ENCODE measurements at regions of chr10 and their contacts with region 1.

Region 1: GRCh38 chr10:93376372-93377293 is 105.5 kb downstream of the MYOF start:
- DNase-seq: peak; percentile 41
- ATAC-seq: peak; percentile 20
- H3K4me3 Mint-ChIP-seq: no peak overlapping the region
- H3K27ac Mint-ChIP-seq: no peak overlapping the region
- H3K4me1 Mint-ChIP-seq: peaks cover 51% of the 10 kb centered on the region
- H3K27me3 Mint-ChIP-seq: peaks cover 5% of the 10 kb centered on the region

Region 2: DNA sequence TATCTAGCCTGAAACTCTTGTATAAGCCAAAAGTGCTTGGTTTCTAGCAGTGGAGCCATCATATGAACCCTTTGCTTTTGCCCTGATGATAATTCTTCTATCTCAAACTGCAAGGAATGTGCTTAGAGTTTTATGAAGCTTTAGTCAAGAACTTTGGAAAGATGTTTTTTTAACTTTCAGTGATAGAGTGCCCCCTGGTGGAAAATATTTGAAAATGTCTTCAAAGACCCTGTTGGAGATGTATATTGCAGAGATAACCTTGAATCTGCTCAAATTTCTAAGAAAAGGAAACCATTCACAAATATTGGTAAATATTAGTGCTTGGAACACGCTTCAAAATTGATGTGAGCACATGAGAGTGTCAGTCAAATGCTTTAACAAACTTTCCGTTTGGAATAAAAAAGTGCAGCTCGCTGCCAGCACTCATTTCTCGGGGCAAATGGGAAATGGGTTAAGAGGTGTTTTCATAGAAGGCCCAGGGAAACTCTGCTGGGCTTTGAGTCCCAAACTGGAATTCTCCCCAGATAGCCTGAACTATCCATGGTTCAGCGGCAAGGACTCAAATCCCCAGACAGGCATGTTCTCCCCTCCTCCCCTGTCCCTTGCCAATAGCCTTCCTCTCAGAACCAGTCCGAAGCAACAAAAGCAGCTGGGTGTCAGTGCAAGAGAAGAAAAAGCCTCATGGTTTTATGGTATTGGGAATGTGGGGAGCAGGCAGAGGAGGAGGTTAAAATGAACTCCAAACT is 23.8 kb before region 1 on chr10:
- CTCF ChIA-PET with region 1: interaction called, 24 read pairs
- POLR2A ChIA-PET with region 1: no interaction called
- intact Hi-C with region 1: no loop called
- DNase-seq: no peak
- ATAC-seq: no peak
- H3K4me3 Mint-ChIP-seq: no peak overlapping the region
- H3K27ac Mint-ChIP-seq: no peak overlapping the region
- H3K4me1 Mint-ChIP-seq: peaks cover 3% of the 10 kb centered on the region
- H3K27me3 Mint-ChIP-seq: peaks cover 4% of the 10 kb centered on the region

Region 3: GRCh38 chr10:93413252-93413689 is 36.6 kb after region 1 on chr10:
- CTCF ChIA-PET with region 1: interaction called, 10 read pairs
- POLR2A ChIA-PET with region 1: no interaction called
- intact Hi-C with region 1: loop called (anchors 2 kb)
- DNase-seq: peak; percentile 35
- ATAC-seq: peak; percentile 62
- H3K4me3 Mint-ChIP-seq: no peak overlapping the region
- H3K27ac Mint-ChIP-seq: peak overlapping the region; percentile 73
- H3K4me1 Mint-ChIP-seq: peaks cover 69% of the 10 kb centered on the region
- H3K27me3 Mint-ChIP-seq: no peaks in the 10 kb centered on the region

Region 4: GRCh38 chr10:93496322-93497041 is 119.8 kb after region 1 on chr10 and contains the start of gene CEP55:
- CTCF ChIA-PET with region 1: interaction called, 48 read pairs
- POLR2A ChIA-PET with region 1: no interaction called
- intact Hi-C with region 1: loop called in 1 of 2 experiments (anchors 5 kb)
- DNase-seq: peak; percentile 98
- ATAC-seq: peak; percentile 99
- H3K4me3 Mint-ChIP-seq: peak within 1 kb of the TSS; percentile 78
- H3K27ac Mint-ChIP-seq: peak within 1 kb of the TSS; percentile 84
- H3K4me1 Mint-ChIP-seq: peaks cover 25% of the 10 kb centered on the region
- H3K27me3 Mint-ChIP-seq: peaks cover 2% of the 10 kb centered on the region
- total RNA-seq, gene CEP55: 67.8 to 76.0 TPM

Region 5: GRCh38 chr10:93515071-93516005 is 138.7 kb after region 1 on chr10:
- CTCF ChIA-PET with region 1: interaction called, 115 read pairs
- POLR2A ChIA-PET with region 1: no interaction called
- intact Hi-C with region 1: loop called (anchors 1 kb)
- DNase-seq: no peak
- ATAC-seq: no peak
- H3K4me3 Mint-ChIP-seq: no peak overlapping the region
- H3K27ac Mint-ChIP-seq: no peak overlapping the region
- H3K4me1 Mint-ChIP-seq: peaks cover 5% of the 10 kb centered on the region
- H3K27me3 Mint-ChIP-seq: no peaks in the 10 kb centered on the region

Region 6: DNA sequence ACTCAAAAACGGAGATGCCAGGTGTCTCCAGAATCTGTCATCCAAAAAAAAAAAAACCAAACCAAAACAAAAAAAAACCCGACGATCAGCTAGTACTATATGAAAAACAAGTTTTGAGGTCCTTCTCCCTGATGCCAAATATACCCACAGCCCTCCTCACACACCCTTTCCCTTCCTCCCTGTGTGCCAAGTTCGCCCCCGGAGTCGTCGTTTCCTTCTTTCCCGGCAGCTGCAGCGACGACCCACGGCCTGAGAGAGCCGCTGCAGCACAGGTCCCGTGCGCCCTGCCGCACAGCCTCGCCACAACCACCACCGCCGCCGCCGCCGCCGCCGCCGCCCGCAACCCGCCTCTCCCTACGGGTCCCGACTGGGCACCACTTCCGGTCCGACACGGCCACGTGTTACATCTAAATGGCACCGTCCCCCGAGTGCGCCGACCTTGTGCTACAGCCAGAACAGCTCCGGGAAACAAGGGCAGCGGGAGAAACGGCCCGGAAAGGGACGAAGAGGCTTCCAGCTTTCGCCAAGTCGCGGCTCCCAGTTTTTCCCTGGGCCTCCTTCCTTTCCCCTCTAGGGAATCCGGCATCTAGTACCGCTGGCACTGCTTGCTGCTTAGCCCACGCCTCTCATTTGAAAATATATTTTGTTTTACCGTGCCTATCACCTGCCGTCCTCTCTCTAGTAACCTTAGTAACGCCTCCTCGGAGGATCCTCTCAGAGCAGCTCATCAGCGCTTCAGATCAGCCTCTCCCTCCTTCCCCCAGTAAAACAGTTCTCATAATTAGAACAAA is 325.8 kb after region 1 on chr10 and contains the start of gene FRA10AC1:
- CTCF ChIA-PET with region 1: no interaction called
- POLR2A ChIA-PET with region 1: no interaction called
- intact Hi-C with region 1: loop called in 1 of 2 experiments (anchors 1 kb)
- DNase-seq: peak; percentile 93
- ATAC-seq: peak; percentile 84
- H3K4me3 Mint-ChIP-seq: no peak within 1 kb of the TSS
- H3K27ac Mint-ChIP-seq: no peak within 1 kb of the TSS
- H3K4me1 Mint-ChIP-seq: peaks cover 29% of the 10 kb centered on the region
- H3K27me3 Mint-ChIP-seq: no peaks in the 10 kb centered on the region
- total RNA-seq, gene FRA10AC1: 18.9 to 29.4 TPM

Measured in activated CD4-positive, alpha-beta T cell treated with anti-CD3 and anti-CD28 coated beads for 36 hours (primary cell).